Activated B cell treated with CpG ODN at 0.5 μM for 24 hours (primary cell): ENCODE measurements at regions of chr1 and their contacts with region 1.

Region 1: DNA sequence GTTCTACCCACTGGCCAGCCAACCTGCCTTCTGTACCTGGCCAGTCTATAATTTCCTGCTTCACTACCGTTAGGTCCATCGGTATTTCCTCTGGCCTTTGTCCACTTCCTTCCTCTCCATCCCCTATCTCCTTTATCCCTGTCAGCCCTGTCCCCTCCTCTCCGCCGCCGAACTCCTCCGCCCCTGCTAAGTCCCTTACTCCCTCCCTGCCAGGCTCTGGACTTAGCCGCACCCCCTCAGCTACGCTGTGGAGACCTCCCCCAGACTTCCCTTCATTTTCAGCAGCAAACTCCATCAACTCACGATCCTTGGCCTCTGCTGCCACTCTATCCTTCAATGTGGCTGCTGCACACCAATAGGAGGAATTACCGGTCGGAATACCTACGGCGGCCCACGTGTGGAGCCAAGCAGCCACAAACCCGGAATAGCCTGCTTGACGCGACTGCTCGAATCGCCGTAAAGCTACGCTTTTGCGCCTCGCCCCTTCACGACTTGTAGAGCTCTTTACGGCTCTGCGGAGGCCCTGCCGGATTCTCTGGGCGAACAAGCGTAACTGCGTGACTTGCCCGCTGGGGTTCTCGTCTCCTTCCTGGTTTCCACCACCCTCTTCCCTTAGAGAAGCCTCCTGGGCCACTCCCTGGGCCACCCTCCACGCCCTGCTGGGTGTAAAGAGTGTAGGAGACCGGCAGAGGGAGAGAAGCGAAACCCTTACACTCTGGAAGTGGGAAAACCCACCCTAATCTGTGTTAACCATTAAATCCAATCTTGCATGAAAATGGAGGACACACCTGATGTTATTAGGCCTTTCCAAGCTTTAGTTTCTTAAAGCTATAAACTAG is at the start of gene ZNHIT6:
- DNase-seq: peak; percentile 69
- ATAC-seq: peak; percentile 96
- H3K4me3 Mint-ChIP-seq: no peak within 1 kb of the TSS
- H3K27ac Mint-ChIP-seq: no peak within 1 kb of the TSS
- H3K4me1 Mint-ChIP-seq: peaks cover 24% of the 10 kb centered on the region
- H3K27me3 Mint-ChIP-seq: no peaks in the 10 kb centered on the region
- CTCF ChIP-seq: no peak
- total RNA-seq, gene ZNHIT6: 19.6 and 21.1 TPM in 2 replicates

Region 2: GRCh38 chr1:84573967-84574842 is 1134.0 kb before region 1 on chr1 and contains the start of gene CTBS:
- CTCF ChIA-PET with region 1: no interaction called
- POLR2A ChIA-PET with region 1: no interaction called
- intact Hi-C with region 1: loop called (anchors 10 kb)
- DNase-seq: peak; percentile 81
- ATAC-seq: peak; percentile 91
- H3K4me3 Mint-ChIP-seq: peak within 1 kb of the TSS; percentile 96
- H3K27ac Mint-ChIP-seq: peak within 1 kb of the TSS; percentile 99
- H3K4me1 Mint-ChIP-seq: peaks cover 40% of the 10 kb centered on the region
- H3K27me3 Mint-ChIP-seq: no peaks in the 10 kb centered on the region
- CTCF ChIP-seq: no peak
- total RNA-seq, gene CTBS: 11.8 and 13.2 TPM in 2 replicates

Region 3: DNA sequence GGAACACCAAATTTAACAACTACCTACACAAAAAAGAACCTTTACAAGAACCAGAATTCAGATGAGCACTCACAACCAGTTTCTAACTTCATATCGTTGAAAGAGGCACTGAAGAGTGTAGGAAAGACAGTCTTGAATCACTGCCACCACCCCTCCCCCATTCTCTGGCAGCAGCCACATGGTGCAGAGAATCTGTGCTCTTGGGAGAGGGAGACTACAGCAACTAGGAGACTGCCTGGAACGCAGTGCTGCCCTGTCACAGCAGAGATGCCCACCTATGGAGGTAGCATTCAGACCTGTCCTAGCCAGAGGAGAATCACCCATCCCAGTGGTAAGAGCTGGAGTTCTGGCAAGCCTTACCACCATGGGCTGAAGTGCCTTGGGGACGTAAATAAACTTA is 120.4 kb before region 1 on chr1:
- CTCF ChIA-PET with region 1: no interaction called
- POLR2A ChIA-PET with region 1: no interaction called
- intact Hi-C with region 1: no loop called
- DNase-seq: no peak
- ATAC-seq: no peak
- H3K4me3 Mint-ChIP-seq: no peak overlapping the region
- H3K27ac Mint-ChIP-seq: no peak overlapping the region
- H3K4me1 Mint-ChIP-seq: no peaks in the 10 kb centered on the region
- H3K27me3 Mint-ChIP-seq: peaks cover 16% of the 10 kb centered on the region
- CTCF ChIP-seq: no peak

Region 4: DNA sequence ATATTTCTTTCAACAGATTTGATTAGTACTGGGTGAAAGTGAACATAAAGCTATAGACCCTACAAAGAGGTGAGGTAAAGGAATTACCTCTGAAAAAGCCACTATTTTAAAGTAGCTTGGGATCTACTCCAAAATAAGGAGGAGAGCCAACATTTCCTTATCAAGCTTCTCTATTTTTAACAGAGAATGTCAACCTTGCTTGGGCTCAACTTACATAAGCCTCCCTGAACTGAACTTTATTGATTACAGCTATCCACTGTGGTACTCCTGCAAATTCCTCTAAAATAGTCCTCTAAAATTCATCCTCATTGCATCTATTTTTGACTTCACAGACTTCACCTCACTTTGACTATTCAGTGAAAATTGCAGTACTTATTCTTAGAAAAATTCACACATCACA is 10.3 kb before region 1 on chr1:
- CTCF ChIA-PET with region 1: no interaction called
- POLR2A ChIA-PET with region 1: interaction called, 4 read pairs
- intact Hi-C with region 1: loop called (anchors 1 kb)
- DNase-seq: no peak
- ATAC-seq: no peak
- H3K4me3 Mint-ChIP-seq: no peak overlapping the region
- H3K27ac Mint-ChIP-seq: no peak overlapping the region
- H3K4me1 Mint-ChIP-seq: peaks cover 8% of the 10 kb centered on the region
- H3K27me3 Mint-ChIP-seq: no peaks in the 10 kb centered on the region
- CTCF ChIP-seq: no peak

Region 5: DNA sequence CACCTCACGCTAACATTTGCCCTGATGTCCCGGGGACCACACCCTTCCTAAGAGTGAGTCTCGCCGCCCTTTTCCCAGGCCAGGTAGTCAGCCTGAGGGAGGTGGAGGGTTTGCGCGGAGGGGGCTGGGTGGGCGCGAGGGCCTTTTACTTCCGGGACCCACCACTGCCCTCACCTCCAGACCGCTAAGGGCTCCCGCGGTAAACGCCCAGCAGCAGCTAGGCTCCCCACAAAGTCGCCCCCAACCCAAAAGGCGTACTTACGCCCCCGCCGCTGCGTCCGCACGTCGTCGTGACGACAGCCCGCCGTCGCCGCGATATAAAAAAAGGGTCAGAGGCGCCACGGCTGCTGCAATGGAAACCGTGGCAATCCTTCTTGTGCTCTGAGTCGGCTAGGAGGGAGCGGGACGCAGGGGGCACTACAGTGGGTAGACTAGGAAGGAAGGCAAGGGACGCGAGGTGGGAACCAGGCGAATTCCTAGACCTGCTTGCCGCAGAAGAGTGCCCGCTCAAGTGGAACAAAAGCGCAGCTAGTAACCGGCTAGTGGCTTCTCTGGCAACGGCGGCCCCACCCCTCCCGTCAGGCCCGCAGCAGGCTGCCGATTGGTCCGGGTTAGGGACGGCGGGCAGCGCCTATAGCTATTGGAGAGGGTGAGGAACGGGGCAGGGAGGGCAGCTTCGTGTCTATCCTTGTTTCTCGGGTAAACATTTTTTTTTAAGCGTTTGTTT is 687.7 kb after region 1 on chr1 and contains the start of gene ODF2L:
- CTCF ChIA-PET with region 1: no interaction called
- POLR2A ChIA-PET with region 1: no interaction called
- intact Hi-C with region 1: loop called (anchors 1 kb)
- DNase-seq: peak; percentile 78
- ATAC-seq: peak; percentile 99
- H3K4me3 Mint-ChIP-seq: peak within 1 kb of the TSS; percentile 98
- H3K27ac Mint-ChIP-seq: peak within 1 kb of the TSS; percentile 95
- H3K4me1 Mint-ChIP-seq: peaks cover 45% of the 10 kb centered on the region
- H3K27me3 Mint-ChIP-seq: no peaks in the 10 kb centered on the region
- CTCF ChIP-seq: no peak
- total RNA-seq, gene ODF2L: 28.2 and 36.1 TPM in 2 replicates